GM13976 (cell line): ENCODE measurements at regions of chr3 and their contacts with region 1.

Region 1: GRCh38 chr3:141105828-141106628 is 54.9 kb downstream of the SPSB4 start:
- DNase-seq: peak; percentile 71
- CTCF ChIP-seq: peak; percentile 83

Region 2: GRCh38 chr3:140922634-140923033 is 183.4 kb before region 1 on chr3:
- in situ Hi-C with region 1: loop called (anchors 25 kb)
- DNase-seq: peak; percentile 32
- CTCF ChIP-seq: peak; percentile 32